ENCODE measurements at regions of chr7 and their contacts with region 1.

Region 1: GRCh38 chr7:104983578-104984539 is 30.1 kb upstream of the KMT2E start:
- DNase-seq: peak; percentile 93
- ATAC-seq: peak; percentile 89
- H3K4me3 Mint-ChIP-seq: peak overlapping the region; percentile 87
- H3K27ac Mint-ChIP-seq: peak overlapping the region; percentile 99
- H3K4me1 Mint-ChIP-seq: peaks cover 74% of the 10 kb centered on the region
- H3K27me3 Mint-ChIP-seq: no peaks in the 10 kb centered on the region

Region 2: DNA sequence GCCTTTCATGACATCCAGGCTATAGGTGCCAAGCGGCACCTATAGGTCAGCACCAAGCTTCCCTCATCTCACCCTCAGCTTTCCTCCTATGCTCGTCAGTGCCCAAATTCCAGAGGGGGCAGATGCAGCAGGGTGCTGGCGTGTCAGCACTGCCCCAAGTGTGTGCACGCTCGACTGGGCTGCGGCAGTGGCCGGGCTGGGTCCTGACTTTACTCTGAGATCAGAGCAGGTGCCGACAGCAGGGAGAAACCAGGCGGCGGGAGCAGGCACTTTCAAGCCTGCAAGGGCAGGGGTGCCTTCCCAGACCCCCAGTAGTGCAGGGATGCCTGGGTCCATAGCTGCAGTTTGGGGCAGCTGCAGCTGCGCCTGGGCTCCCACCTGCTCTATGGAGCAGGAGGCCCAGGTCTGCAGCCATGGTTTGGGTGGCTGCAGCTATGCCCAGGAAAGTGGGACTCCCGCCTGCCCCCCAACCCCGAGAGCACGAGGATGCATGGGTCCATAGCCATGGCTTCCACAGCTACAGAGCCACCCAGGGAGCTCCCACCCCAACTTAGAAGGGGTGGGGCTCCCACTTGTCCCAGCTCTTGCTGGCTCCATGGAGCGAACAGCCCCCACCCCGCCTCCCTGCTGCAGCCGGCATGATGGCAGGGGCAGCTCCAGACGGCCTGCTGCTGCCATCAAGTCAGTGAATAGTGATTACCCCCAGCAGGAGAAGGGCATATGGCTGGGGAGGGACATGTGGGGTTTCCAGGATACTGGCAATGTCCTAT is 169.0 kb before region 1 on chr7:
- CTCF ChIA-PET with region 1: no interaction called
- POLR2A ChIA-PET with region 1: no interaction called
- intact Hi-C with region 1: no loop called
- DNase-seq: no peak
- ATAC-seq: no peak
- H3K4me3 Mint-ChIP-seq: no peak overlapping the region
- H3K27ac Mint-ChIP-seq: no peak overlapping the region
- H3K4me1 Mint-ChIP-seq: no peaks in the 10 kb centered on the region
- H3K27me3 Mint-ChIP-seq: peaks cover 10% of the 10 kb centered on the region

Region 3: GRCh38 chr7:104956753-104957450 is 27.0 kb before region 1 on chr7:
- CTCF ChIA-PET with region 1: interaction called, 7 read pairs
- POLR2A ChIA-PET with region 1: interaction called, 4 read pairs
- intact Hi-C with region 1: loop called in 1 of 2 experiments (anchors 2 kb)
- DNase-seq: peak; percentile 64
- ATAC-seq: peak; percentile 87
- H3K4me3 Mint-ChIP-seq: peak overlapping the region; percentile 38
- H3K27ac Mint-ChIP-seq: peak overlapping the region; percentile 96
- H3K4me1 Mint-ChIP-seq: peaks cover 47% of the 10 kb centered on the region
- H3K27me3 Mint-ChIP-seq: no peaks in the 10 kb centered on the region

Region 4: GRCh38 chr7:105024743-105025142 is 40.9 kb after region 1 on chr7:
- CTCF ChIA-PET with region 1: interaction called, 32 read pairs
- POLR2A ChIA-PET with region 1: interaction called, 4 read pairs
- intact Hi-C with region 1: no loop called
- DNase-seq: no peak
- ATAC-seq: peak; percentile 17
- H3K4me3 Mint-ChIP-seq: no peak overlapping the region
- H3K27ac Mint-ChIP-seq: peak overlapping the region; percentile 60
- H3K4me1 Mint-ChIP-seq: peaks cover 91% of the 10 kb centered on the region
- H3K27me3 Mint-ChIP-seq: no peaks in the 10 kb centered on the region

Region 5: DNA sequence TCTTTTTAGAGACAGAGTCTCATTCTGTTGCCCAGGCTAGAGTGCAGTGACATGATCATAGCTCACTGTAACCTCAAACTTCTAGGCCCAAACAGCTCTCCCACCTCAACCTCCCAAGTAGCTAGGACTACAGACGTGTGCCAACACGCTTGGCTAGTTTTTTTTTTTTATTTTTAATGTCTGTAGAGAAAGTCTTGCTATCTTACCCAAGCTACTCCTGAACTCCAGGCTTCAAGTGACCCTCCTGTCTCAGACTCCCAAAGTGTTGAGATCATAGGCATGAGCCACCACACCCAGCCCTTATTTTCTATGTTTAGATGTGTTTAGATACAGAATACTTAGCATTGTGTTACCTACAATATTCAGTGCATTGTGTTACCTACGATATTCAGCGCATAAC is 76.6 kb after region 1 on chr7:
- CTCF ChIA-PET with region 1: interaction called, 20 read pairs
- POLR2A ChIA-PET with region 1: no interaction called
- intact Hi-C with region 1: no loop called
- DNase-seq: no peak
- ATAC-seq: no peak
- H3K4me3 Mint-ChIP-seq: no peak overlapping the region
- H3K27ac Mint-ChIP-seq: no peak overlapping the region
- H3K4me1 Mint-ChIP-seq: peaks cover 56% of the 10 kb centered on the region
- H3K27me3 Mint-ChIP-seq: no peaks in the 10 kb centered on the region

Region 6: GRCh38 chr7:105336009-105336408 is 352.1 kb after region 1 on chr7:
- CTCF ChIA-PET with region 1: interaction called, 3 read pairs
- POLR2A ChIA-PET with region 1: no interaction called
- intact Hi-C with region 1: loop called in 1 of 2 experiments (anchors 2 kb)
- DNase-seq: no peak
- ATAC-seq: no peak
- H3K4me3 Mint-ChIP-seq: no peak overlapping the region
- H3K27ac Mint-ChIP-seq: no peak overlapping the region
- H3K4me1 Mint-ChIP-seq: peaks cover 21% of the 10 kb centered on the region
- H3K27me3 Mint-ChIP-seq: no peaks in the 10 kb centered on the region

Region 7: GRCh38 chr7:105531792-105532671 is 548.2 kb after region 1 on chr7 and contains the start of gene RINT1:
- CTCF ChIA-PET with region 1: no interaction called
- POLR2A ChIA-PET with region 1: no interaction called
- intact Hi-C with region 1: loop called in 1 of 2 experiments (anchors 5 kb)
- DNase-seq: peak; percentile 94
- ATAC-seq: peak; percentile 94
- H3K4me3 Mint-ChIP-seq: peak within 1 kb of the TSS; percentile 91
- H3K27ac Mint-ChIP-seq: peak within 1 kb of the TSS; percentile 91
- H3K4me1 Mint-ChIP-seq: peaks cover 23% of the 10 kb centered on the region
- H3K27me3 Mint-ChIP-seq: no peaks in the 10 kb centered on the region
- total RNA-seq, gene RINT1: 21.2 to 26.2 TPM